Esophagus muscularis mucosa (tissue), 4 donors: ENCODE measurements at regions of chr11 and their contacts with region 1.

Region 1: DNA sequence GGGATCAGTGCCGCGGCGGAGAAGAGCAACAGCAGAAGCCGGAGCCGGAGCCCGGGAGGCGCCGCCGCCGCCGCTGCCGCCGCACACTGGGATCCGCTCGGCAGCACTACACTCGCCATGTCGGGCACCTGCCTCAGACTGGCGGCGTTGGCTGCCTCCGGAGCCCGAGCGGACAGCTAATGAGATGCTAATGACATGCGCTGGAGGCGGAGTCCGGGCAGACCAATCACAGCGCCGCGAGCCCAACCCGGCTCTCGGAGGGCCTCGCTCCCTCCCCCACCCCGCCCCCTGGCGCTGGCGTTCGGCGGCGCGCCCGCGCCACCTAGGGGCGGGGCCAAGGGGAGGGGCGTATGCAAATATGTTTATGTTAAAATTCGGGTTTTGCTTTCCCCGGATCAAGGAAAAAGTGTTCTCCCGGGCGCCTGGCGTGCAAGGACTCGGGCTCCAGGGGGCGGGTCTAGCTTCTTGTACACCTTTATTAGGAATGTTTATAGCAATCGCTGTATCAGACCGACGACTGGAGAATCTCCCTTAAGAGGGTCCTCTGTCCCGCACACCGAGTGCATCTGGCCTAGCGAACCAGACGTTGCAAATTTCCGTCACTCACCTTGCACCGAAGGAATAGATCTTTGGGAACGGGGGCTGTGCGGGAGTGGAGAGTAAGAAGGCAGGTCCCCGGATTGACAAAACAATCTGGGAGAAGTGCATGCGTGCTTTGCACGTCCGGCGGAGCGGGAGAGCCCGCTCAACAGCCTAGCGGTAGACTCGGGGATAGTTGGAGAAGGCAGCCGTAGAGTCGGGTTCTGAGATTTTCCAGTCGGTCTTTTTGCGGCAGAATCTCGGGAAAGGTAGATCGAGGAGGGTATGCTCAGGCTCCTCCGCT is at the start of gene CADM1:
- DNase-seq: no peak
- H3K4me3 ChIP-seq: peak within 1 kb of the TSS; percentile 67 to 70 (median 68)
- H3K27ac ChIP-seq: peak within 1 kb of the TSS; percentile 80 to 89 (median 84)
- H3K4me1 ChIP-seq: peaks cover 10 to 38% (median 33%) of the 10 kb centered on the region in 4 donors
- H3K27me3 ChIP-seq: peaks cover 0 to 23% (median 0%) of the 10 kb centered on the region in 4 donors
- CTCF ChIP-seq: peak; percentile 35 to 59 (median 56)
- EP300 ChIP-seq: no peak
- POLR2A ChIP-seq: peak; percentile 70
- total RNA-seq, gene CADM1: 10.6 to 15.7 (median 13.8) TPM

Region 2: GRCh38 chr11:115334932-115335788 is 169.4 kb before region 1 on chr11:
- intact Hi-C with region 1: loop called (anchors 2 kb)
- DNase-seq: no peak
- H3K4me3 ChIP-seq: no peak overlapping the region
- H3K27ac ChIP-seq: no peak overlapping the region
- H3K4me1 ChIP-seq: no peaks in the 10 kb centered on the region
- H3K27me3 ChIP-seq: no peaks in the 10 kb centered on the region
- CTCF ChIP-seq: peak; percentile 69 to 79 (median 72)
- EP300 ChIP-seq: no peak
- POLR2A ChIP-seq: no peak

Region 3: DNA sequence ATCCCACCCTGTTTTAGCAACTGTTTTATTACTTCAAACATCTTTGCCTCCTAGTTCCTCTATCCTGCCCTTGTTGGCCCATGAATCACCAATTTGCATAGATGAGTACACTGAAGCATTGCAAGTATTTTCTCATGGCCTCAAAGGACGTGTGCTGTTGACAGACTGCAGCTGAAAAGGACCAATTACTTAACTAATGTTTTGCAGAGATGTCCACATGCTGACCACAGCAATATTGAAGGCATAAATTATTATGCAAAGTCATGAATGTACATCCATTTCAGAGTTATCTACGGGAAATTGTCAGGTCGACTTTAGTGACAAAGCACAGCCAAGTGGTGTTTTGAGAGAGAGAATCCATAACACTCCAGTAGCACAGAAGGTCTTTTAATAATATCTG is 65.1 kb before region 1 on chr11:
- intact Hi-C with region 1: no loop called
- DNase-seq: no peak
- H3K4me3 ChIP-seq: no peak overlapping the region
- H3K27ac ChIP-seq: no peak overlapping the region
- H3K4me1 ChIP-seq: no peaks in the 10 kb centered on the region
- H3K27me3 ChIP-seq: no peaks in the 10 kb centered on the region
- CTCF ChIP-seq: no peak
- EP300 ChIP-seq: no peak
- POLR2A ChIP-seq: no peak

Region 4: GRCh38 chr11:115626414-115626813 is 121.9 kb after region 1 on chr11:
- intact Hi-C with region 1: loop called (anchors 5 kb)
- DNase-seq: no peak
- H3K4me3 ChIP-seq: no peak overlapping the region
- H3K27ac ChIP-seq: no peak overlapping the region
- H3K4me1 ChIP-seq: peaks cover 15 to 21% (median 17%) of the 10 kb centered on the region in 4 donors
- H3K27me3 ChIP-seq: peaks cover 0 to 4% (median 0%) of the 10 kb centered on the region in 4 donors
- CTCF ChIP-seq: no peak
- EP300 ChIP-seq: no peak
- POLR2A ChIP-seq: no peak

Region 5: GRCh38 chr11:115699733-115700132 is 195.2 kb after region 1 on chr11:
- intact Hi-C with region 1: loop called (anchors 10 kb)
- DNase-seq: no peak
- H3K4me3 ChIP-seq: no peak overlapping the region
- H3K27ac ChIP-seq: peak overlapping the region; percentile 44 to 64 (median 58)
- H3K4me1 ChIP-seq: peaks cover 18 to 44% (median 32%) of the 10 kb centered on the region in 4 donors
- H3K27me3 ChIP-seq: no peaks in the 10 kb centered on the region
- CTCF ChIP-seq: no peak
- EP300 ChIP-seq: no peak
- POLR2A ChIP-seq: no peak